ENCODE measurements at regions of chr18 and their contacts with region 1.

Region 1: GRCh38 chr18:13726232-13726971 is at the starts of genes FAM210A and RNMT:
- DNase-seq: peak; percentile 87 to 94
- H3K4me3 ChIP-seq: peak within 1 kb of the TSS; percentile 97
- H3K27ac ChIP-seq: peak within 1 kb of the TSS; percentile 82
- H3K4me1 ChIP-seq: peaks cover 19% of the 10 kb centered on the region
- H3K27me3 ChIP-seq: no peaks in the 10 kb centered on the region
- CTCF ChIP-seq: no peak
- total RNA-seq, gene FAM210A: 27.3 and 29.3 TPM in 2 replicates
- total RNA-seq, gene RNMT: 32.0 and 48.8 TPM in 2 replicates

Region 2: DNA sequence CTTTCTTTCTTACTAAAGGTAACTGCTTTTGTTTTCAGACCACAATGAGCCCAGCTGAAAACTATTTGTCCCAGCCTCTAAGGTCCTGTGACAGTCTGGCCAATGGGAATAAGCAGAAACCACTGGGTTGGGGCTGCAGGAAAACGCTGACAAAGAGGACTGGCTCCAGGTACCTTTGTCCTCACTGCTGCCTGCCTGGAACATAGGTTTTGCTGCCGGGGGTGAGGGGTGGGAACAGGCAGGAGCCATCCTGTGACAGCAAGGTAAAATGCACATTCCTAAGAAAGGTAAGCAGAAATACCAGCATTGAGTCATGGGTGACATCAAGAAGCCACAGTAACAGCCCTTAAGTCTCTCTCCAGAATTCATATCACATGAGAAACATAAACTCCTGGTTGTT is 863.9 kb before region 1 on chr18:
- CTCF ChIA-PET with region 1: no interaction called
- POLR2A ChIA-PET with region 1: no interaction called
- intact Hi-C with region 1: no loop called
- DNase-seq: peak; percentile 87 to 88
- H3K4me3 ChIP-seq: no peak overlapping the region
- H3K27ac ChIP-seq: peak overlapping the region; percentile 85
- H3K4me1 ChIP-seq: peaks cover 32% of the 10 kb centered on the region
- H3K27me3 ChIP-seq: no peaks in the 10 kb centered on the region
- CTCF ChIP-seq: no peak

Region 3: GRCh38 chr18:13262839-13263691 is 463.3 kb before region 1 on chr18:
- CTCF ChIA-PET with region 1: no interaction called
- POLR2A ChIA-PET with region 1: interaction called, 13 read pairs
- intact Hi-C with region 1: no loop called
- DNase-seq: no peak
- H3K4me3 ChIP-seq: no peak overlapping the region
- H3K27ac ChIP-seq: no peak overlapping the region
- H3K4me1 ChIP-seq: no peaks in the 10 kb centered on the region
- H3K27me3 ChIP-seq: peaks cover 69% of the 10 kb centered on the region
- CTCF ChIP-seq: no peak

Region 4: DNA sequence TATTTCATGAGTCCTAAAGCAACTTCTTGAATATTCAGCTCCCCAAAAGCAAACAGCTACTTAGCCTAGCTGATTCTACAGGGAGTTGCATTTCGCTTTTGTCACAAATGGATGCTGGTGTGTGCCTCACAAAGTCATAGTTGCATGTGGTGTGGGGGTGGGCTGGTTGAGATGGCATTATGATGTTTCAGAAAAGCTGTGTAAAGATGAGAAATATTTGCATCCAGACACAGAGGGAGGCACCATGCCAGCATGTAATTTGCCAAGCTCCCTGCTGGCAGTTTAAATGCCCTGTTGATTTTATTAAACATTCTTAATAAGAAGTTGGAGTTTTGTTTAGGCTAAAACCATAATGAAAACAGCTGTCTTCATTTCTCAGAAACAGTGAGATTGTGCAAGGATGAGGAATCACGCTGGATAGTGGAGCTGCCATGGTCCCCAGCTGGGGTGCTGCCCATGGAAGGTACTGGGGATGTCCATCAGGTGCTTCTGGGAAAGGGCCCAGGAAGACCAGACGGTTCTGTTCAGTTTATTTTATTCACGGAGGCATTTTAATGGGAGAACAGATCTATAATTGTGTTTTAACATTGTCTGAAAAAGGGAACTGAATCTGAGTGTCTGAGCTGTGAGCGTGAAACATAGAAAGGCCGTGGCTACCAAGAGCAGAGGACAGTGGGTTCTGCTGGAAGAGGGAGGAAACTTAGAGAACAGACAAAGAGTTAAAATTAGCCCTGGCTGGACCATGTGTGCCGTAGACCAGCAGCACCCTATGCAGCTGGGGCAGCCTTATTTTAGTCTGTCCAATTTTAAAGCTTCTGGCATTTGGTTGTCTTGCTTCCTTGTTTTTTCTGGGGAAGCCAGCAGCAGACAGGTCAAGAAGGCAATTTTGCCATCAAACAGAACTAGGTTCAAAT is 177.2 kb before region 1 on chr18:
- CTCF ChIA-PET with region 1: no interaction called
- POLR2A ChIA-PET with region 1: no interaction called
- intact Hi-C with region 1: no loop called
- DNase-seq: no peak
- H3K4me3 ChIP-seq: no peak overlapping the region
- H3K27ac ChIP-seq: no peak overlapping the region
- H3K4me1 ChIP-seq: no peaks in the 10 kb centered on the region
- H3K27me3 ChIP-seq: peaks cover 99% of the 10 kb centered on the region
- CTCF ChIP-seq: no peak

Region 5: DNA sequence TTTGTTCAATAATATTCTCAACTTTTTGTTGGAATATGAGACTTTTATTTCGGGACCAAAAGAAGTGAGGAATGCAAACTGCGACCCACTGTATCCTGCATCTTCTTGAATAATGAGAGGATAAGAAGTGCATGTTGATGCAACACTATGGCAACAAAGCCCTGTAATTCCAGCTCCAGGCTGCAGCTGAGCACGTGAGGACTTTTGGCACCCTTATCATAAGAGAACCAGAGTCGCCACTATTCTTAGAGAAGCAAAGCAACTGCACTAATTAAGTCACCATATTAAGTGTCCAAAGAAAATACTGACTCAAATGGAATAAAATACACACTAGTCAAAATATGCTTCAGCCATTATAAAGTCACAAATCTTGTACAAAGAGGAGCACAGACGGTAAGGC is 65.9 kb before region 1 on chr18:
- CTCF ChIA-PET with region 1: no interaction called
- POLR2A ChIA-PET with region 1: no interaction called
- intact Hi-C with region 1: loop called (anchors 5 kb)
- DNase-seq: no peak
- H3K4me3 ChIP-seq: no peak overlapping the region
- H3K27ac ChIP-seq: no peak overlapping the region
- H3K4me1 ChIP-seq: no peaks in the 10 kb centered on the region
- H3K27me3 ChIP-seq: no peaks in the 10 kb centered on the region
- CTCF ChIP-seq: no peak

Region 6: GRCh38 chr18:13680612-13681011 is 45.8 kb before region 1 on chr18:
- CTCF ChIA-PET with region 1: no interaction called
- POLR2A ChIA-PET with region 1: no interaction called
- intact Hi-C with region 1: no loop called
- DNase-seq: no peak
- H3K4me3 ChIP-seq: no peak overlapping the region
- H3K27ac ChIP-seq: no peak overlapping the region
- H3K4me1 ChIP-seq: no peaks in the 10 kb centered on the region
- H3K27me3 ChIP-seq: no peaks in the 10 kb centered on the region
- CTCF ChIP-seq: peak; percentile 57

Region 7: GRCh38 chr18:13710460-13710859 is 15.9 kb before region 1 on chr18:
- CTCF ChIA-PET with region 1: no interaction called
- POLR2A ChIA-PET with region 1: no interaction called
- intact Hi-C with region 1: loop called (anchors 1 kb)
- DNase-seq: peak; percentile 81 to 96
- H3K4me3 ChIP-seq: no peak overlapping the region
- H3K27ac ChIP-seq: peak overlapping the region; percentile 96
- H3K4me1 ChIP-seq: peaks cover 19% of the 10 kb centered on the region
- H3K27me3 ChIP-seq: no peaks in the 10 kb centered on the region
- CTCF ChIP-seq: no peak

Measured in PC-9 (cell line).